Heart left ventricle (tissue), 16 donors: ENCODE measurements at regions of chr12 and their contacts with region 1.

Region 1: GRCh38 chr12:91985002-91985787 is 160.5 kb downstream of the BTG1 start:
- DNase-seq: no peak
- ATAC-seq: peak in 1 of 4 donors; percentile 56
- H3K4me3 ChIP-seq: no peak overlapping the region
- H3K27ac ChIP-seq: peak overlapping the region in 4 of 12 donors; percentile 2 to 46 (median 30)
- H3K4me1 ChIP-seq: peaks cover 0 to 58% (median 29%) of the 10 kb centered on the region in 12 donors
- H3K27me3 ChIP-seq: no peaks in the 10 kb centered on the region
- CTCF ChIP-seq: no peak
- POLR2A ChIP-seq: no peak

Region 2: DNA sequence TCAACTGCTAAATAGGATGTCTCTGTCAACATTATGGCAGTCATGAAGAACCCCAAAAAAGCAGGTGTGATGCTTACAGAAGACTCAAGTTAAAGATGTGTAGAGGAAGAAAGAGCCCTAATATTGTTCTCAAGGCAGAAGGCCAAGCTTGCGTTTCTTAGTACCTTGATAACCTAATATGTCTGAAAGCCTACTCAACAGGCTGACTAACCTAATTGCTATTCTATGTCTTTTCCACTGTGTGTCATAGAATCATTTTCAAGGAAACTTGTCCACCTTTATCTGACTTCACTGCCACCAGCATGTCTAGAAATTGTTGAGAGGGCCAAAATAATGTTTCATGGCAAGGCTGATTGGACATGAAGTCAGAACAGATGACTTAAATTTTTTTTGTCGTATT is 212.8 kb before region 1 on chr12:
- intact Hi-C with region 1: no loop called
- DNase-seq: no peak
- ATAC-seq: no peak
- H3K4me3 ChIP-seq: no peak overlapping the region
- H3K27ac ChIP-seq: no peak overlapping the region
- H3K4me1 ChIP-seq: peaks cover 0 to 16% (median 2%) of the 10 kb centered on the region in 12 donors
- H3K27me3 ChIP-seq: no peaks in the 10 kb centered on the region
- CTCF ChIP-seq: no peak
- POLR2A ChIP-seq: no peak

Region 3: GRCh38 chr12:91877022-91877421 is 108.2 kb before region 1 on chr12:
- intact Hi-C with region 1: no loop called
- DNase-seq: peak in 4 of 5 donors; percentile 10 to 58 (median 32)
- ATAC-seq: peak; percentile 37 to 89 (median 57)
- H3K4me3 ChIP-seq: no peak overlapping the region
- H3K27ac ChIP-seq: peak overlapping the region in 1 of 12 donors; percentile 86
- H3K4me1 ChIP-seq: peaks cover 0 to 28% (median 0%) of the 10 kb centered on the region in 12 donors
- H3K27me3 ChIP-seq: no peaks in the 10 kb centered on the region
- CTCF ChIP-seq: no peak
- POLR2A ChIP-seq: no peak

Region 4: GRCh38 chr12:92034858-92035401 is 49.7 kb after region 1 on chr12:
- intact Hi-C with region 1: loop called in 1 of 10 experiments (anchors 10 kb)
- DNase-seq: peak; percentile 28 to 62 (median 47)
- ATAC-seq: peak in 3 of 4 donors; percentile 42 to 69 (median 66)
- H3K4me3 ChIP-seq: peak overlapping the region in 8 of 12 donors; percentile 4 to 48 (median 30)
- H3K27ac ChIP-seq: peak overlapping the region in 8 of 12 donors; percentile 2 to 78 (median 24)
- H3K4me1 ChIP-seq: peaks cover 0 to 74% (median 23%) of the 10 kb centered on the region in 12 donors
- H3K27me3 ChIP-seq: no peaks in the 10 kb centered on the region
- CTCF ChIP-seq: no peak
- POLR2A ChIP-seq: no peak

Region 5: DNA sequence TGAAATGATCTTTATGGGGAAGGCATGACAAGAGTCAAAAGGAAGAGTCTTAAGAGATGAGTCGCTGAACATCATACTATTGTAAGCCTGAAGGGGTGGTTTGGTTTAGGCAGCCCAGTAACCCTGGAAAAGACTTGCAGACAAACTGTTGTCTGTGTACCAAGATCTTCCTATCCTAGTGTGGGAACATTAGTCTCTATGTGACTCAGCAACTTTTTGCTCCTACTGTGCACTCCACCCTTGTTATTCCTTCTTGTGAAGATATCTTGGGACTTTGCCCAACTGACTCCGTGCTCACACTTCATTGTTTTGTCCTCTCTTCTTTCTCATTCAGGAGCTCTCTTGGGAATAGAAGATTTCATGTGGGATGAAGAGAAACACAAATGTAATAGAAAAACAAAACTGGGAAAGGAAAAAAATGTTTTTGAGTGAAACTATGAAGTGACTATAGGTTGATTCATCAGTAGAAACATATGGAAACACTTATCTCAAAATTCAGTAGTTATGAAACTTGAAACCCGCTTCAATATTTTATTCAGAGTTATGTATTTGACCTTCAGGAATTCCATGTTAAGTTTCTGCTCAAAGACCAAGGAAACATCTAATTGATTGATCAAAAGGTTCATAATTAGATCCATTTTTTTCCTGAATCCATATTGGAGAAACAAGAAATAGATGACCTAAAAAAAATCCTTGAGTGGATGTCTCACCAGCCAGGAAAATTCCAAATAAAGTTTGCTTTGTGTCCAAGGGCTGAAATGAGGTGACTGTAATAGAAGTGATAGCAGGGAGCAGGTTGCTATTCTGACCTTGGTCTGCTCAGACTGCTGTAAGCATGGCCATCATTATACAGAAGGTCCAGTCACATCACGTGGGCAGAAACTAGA is 93.2 kb after region 1 on chr12:
- intact Hi-C with region 1: loop called in 1 of 10 experiments (anchors 10 kb)
- DNase-seq: no peak
- ATAC-seq: peak in 3 of 4 donors; percentile 64 to 82 (median 69)
- H3K4me3 ChIP-seq: no peak overlapping the region
- H3K27ac ChIP-seq: peak overlapping the region in 3 of 12 donors; percentile 1 to 51 (median 4)
- H3K4me1 ChIP-seq: peaks cover 0 to 58% (median 24%) of the 10 kb centered on the region in 12 donors
- H3K27me3 ChIP-seq: no peaks in the 10 kb centered on the region
- CTCF ChIP-seq: no peak
- POLR2A ChIP-seq: no peak